ENCODE measurements at regions of chr1 and their contacts with region 1.

Region 1: DNA sequence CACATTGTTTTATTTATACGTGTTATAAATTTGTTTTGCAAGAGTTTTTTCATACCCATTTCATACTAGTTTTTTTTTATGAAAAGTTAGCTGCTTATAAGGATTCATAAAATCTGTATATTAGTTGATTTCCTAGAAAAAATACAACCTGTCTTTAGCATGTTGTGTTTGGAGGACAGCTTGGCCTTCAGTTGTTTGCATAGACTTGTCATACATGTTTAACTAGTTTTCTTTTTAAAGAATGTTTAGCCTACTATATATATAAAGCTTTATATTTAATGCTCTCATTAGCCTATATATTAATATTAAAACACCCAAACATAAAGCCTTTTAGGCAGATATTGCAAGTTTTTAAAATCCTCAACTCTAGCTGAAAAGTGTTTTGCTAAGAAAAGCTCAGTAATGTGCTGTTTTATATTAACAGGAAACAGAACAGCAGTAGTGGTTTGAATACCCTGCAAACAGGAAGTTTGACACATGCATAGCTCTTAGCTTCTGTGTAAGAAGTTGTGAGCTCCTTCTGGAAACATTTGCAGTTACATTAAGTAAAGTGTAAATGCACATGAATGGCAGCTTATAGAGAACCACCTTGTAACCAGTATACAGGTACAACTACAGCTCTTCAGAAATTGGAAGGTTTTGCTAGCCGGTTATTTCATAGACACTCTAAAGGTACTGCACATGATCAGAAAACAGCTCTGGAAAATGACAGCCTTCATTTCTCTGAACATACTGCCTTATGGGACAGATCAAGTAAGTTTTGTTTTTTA is at the start of gene PRKACB:
- DNase-seq: no peak

Region 2: GRCh38 chr1:84298328-84298683 is 154.3 kb after region 1 on chr1:
- intact Hi-C with region 1: loop called (anchors 10 kb)
- DNase-seq: peak; percentile 45 to 96 (median 63)

Region 3: GRCh38 chr1:84433258-84434080 is 289.5 kb after region 1 on chr1:
- intact Hi-C with region 1: loop called (anchors 2 kb)
- DNase-seq: peak in 8 of 10 donors; percentile 33 to 87 (median 61)

Region 4: GRCh38 chr1:84620720-84621313 is 476.8 kb after region 1 on chr1:
- intact Hi-C with region 1: loop called (anchors 2 kb)
- DNase-seq: peak; percentile 41 to 97 (median 76)

Region 5: DNA sequence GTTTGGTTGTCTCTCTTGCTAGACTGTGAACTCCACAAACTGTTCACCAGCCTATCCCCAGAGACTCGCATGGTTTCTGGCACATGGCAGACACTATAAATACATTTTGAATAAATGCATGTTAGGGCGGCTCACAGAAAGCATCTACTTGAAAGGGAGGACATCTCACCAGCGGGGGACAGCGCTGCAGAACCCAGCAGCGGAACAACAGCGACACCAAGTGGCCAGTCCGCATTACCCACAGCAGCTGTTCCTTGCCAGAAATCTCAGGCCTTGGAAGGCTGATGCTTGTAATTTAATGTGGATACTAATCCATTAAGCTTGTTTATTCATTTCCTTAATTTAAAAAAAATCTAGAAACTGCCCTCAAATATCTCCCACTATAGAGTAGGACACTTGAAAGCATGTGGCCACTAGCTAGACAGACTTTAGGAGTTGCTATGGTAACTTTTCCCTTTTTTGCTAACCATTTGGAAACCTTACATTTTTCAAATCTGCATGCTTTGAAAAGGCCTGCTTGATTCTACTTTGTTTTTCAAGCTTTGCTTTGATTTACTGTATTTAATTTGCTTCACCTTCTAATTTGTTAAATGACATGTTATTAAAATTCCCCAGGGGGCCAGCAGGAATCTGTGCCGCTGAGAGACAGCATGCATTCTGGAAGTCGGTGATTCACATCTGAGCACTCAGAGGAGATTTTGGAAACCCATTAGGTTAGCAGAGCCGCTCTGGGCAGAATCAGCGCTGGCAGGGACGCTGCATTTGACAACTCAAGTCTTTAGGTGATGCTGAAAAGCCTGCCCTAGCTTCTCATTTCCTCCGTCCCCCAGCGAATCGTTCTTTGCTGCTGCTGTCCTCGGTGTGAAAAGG is 609.8 kb after region 1 on chr1:
- intact Hi-C with region 1: loop called (anchors 5 kb)
- DNase-seq: peak; percentile 66 to 97 (median 84)

Region 6: GRCh38 chr1:84772428-84772943 is 628.5 kb after region 1 on chr1:
- intact Hi-C with region 1: loop called (anchors 5 kb)
- DNase-seq: peak; percentile 66 to 96 (median 90)

Region 7: DNA sequence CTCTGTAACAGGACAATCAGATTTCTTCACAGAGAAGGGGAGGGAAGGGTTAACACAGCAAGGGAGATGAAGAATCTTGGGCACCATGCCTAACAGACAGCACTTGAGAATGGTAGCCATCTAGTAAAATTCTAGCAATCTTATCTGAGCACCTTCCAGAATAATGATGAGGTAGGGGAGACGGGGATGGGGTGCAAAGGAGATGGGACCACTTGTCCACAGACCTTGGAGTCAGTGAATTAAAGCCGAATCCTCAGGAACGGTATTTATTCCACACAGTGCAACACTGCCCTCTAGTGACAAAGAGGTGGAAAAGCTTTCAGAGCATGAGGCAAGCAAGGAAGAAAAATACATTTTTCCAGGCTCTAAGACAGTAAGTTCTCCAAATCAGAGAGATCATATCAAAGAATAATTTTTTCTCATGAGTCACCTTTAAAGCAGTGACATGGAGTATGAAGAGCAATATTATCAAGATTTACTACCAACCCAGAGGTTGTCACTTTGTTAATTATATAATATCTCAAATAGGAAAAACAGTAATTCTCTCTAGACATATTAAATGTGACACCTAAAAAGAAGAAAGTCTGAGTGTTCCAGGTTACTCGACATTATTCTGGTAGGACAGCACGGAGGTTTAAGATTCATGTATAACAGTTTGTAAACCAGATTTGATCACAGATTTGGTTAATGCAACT is 792.3 kb after region 1 on chr1:
- intact Hi-C with region 1: loop called (anchors 10 kb)
- DNase-seq: peak in 1 of 10 donors; percentile 21

Measured in posterior cingulate gyrus (tissue), 11 donors.